PC-9 (cell line): ENCODE measurements at regions of chr12 and their contacts with region 1.

Region 1: GRCh38 chr12:13165617-13166041 is 30.9 kb upstream of the EMP1 start:
- DNase-seq: peak; percentile 95 to 98
- H3K4me3 ChIP-seq: no peak overlapping the region
- H3K27ac ChIP-seq: peak overlapping the region; percentile 97
- H3K4me1 ChIP-seq: peaks cover 73% of the 10 kb centered on the region
- H3K27me3 ChIP-seq: no peaks in the 10 kb centered on the region
- CTCF ChIP-seq: no peak

Region 2: DNA sequence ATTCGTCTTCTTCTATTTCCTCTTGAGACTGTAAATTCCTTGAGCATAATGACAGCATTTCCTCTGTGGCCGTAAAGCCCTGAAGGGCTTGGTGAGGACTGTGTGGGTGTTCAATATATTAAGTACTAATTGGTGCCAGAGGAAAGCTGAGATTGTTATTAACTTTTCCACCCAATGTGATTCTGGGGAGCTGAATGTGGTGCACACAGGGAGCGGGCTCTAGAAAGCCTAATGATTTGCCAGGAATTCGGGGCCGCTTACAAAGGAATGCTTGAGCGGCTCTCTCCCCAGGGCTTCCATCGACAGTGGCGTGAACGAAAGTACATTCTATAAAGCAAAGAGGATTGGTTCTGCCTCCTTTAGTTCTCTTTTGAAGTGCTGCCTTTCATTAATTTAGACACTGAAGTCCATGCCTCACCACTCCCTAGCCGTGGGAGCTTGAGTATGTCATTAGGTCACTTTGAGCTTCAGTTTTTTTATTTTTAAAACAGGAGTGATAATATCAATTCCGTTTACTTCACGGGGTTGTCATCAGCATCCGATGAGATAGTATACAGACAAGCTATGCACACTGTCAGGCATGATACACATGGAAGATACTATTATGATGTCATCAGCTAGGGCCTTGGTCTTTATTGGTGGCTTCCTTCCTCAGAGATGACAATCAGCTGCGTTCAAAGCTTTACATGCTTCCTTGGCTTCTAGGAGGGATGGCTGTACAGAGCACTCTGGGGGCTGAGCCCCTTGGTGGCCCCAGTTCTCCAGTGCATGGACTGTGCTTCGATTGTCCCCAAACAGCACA is 51.2 kb before region 1 on chr12:
- CTCF ChIA-PET with region 1: no interaction called
- POLR2A ChIA-PET with region 1: interaction called, 13 read pairs
- intact Hi-C with region 1: no loop called
- DNase-seq: no peak
- H3K4me3 ChIP-seq: no peak overlapping the region
- H3K27ac ChIP-seq: no peak overlapping the region
- H3K4me1 ChIP-seq: peaks cover 15% of the 10 kb centered on the region
- H3K27me3 ChIP-seq: no peaks in the 10 kb centered on the region
- CTCF ChIP-seq: no peak

Region 3: DNA sequence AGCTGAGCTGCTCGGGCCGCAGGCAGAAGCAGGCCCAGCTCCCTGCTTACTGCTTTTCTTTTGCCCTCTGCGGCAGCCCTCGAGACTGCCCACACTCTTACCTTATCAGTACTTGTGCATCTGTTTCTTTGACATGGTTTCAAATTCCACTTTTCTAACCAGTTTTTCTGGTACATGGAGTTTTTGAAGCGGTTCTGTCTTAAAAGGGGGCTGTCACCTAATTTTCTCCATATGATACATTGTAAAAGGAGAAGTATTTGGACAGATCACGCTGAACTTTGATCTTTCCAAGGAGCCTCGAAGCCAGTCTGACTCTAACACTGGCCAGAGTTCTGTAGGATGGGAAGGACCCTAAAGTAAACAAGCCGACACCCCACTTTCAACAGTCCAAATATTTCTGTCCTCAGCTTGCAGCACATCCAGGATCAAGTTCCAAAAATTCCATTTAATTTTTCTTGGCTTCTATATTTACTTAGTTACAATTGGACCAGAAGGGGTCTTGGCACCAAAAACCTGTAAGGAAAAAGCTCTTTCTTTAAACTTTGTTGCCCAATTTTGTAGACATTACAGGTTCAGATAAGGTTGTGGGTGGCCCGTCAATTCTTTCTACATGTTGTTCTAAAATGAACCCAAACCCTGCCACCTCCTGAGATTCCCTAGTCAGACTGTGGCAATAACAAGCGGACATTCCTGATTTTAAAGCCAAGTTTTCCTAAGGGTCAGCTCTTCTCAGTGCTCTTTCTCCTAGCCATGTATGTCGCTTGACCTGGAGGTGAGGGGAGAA is 17.4 kb before region 1 on chr12:
- CTCF ChIA-PET with region 1: interaction called, 4 read pairs
- POLR2A ChIA-PET with region 1: interaction called, 19 read pairs
- intact Hi-C with region 1: no loop called
- DNase-seq: peak; percentile 68 to 84
- H3K4me3 ChIP-seq: no peak overlapping the region
- H3K27ac ChIP-seq: peak overlapping the region; percentile 43
- H3K4me1 ChIP-seq: peaks cover 38% of the 10 kb centered on the region
- H3K27me3 ChIP-seq: no peaks in the 10 kb centered on the region
- CTCF ChIP-seq: no peak

Region 4: DNA sequence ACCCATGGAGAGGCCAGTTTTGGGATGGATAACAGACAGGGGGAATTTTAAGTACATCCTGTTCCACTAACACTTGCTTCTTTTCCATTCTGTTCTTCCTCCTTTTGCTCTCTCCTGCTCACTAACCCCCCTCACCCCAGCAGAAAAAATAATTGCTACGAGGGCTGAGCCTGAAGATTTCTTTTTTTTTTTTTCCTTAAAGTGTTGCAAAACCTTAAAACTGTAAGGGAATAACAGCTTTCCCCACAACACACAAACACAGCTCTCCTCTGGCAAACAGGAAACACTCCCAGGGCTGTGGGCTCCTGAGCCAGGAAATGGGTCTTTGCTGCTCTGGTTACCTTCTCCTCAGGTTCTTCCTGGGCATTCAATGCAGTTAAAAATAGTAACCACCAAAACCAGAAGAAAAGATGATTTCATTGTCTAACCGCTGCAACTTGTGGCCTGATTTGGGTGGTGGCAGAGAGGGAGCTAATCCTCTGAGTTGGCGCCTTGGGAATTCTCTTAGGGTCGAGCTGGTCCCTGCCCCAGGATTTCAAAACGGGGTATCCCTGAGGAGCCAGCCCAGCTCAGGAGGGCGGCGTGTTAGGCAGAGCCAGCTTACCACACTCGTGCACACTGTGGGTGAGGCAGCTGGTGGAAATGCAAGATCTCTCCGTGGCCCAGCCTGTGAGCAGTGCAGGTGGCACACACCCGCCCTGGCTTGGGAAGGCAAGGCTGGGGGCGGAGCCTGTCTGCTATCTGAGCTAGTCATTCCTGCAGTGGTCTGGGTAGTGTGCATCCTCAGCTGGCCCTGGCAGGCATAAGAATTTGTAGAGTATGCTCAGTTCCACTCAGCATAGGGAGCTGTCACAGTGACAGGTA is 13.8 kb after region 1 on chr12:
- CTCF ChIA-PET with region 1: no interaction called
- POLR2A ChIA-PET with region 1: interaction called, 27 read pairs
- intact Hi-C with region 1: no loop called
- DNase-seq: peak; percentile 94 to 95
- H3K4me3 ChIP-seq: peak overlapping the region; percentile 39; the same call in 1 of the 2 replicates
- H3K27ac ChIP-seq: peak overlapping the region; percentile 95
- H3K4me1 ChIP-seq: peaks cover 89% of the 10 kb centered on the region
- H3K27me3 ChIP-seq: no peaks in the 10 kb centered on the region
- CTCF ChIP-seq: no peak

Region 5: DNA sequence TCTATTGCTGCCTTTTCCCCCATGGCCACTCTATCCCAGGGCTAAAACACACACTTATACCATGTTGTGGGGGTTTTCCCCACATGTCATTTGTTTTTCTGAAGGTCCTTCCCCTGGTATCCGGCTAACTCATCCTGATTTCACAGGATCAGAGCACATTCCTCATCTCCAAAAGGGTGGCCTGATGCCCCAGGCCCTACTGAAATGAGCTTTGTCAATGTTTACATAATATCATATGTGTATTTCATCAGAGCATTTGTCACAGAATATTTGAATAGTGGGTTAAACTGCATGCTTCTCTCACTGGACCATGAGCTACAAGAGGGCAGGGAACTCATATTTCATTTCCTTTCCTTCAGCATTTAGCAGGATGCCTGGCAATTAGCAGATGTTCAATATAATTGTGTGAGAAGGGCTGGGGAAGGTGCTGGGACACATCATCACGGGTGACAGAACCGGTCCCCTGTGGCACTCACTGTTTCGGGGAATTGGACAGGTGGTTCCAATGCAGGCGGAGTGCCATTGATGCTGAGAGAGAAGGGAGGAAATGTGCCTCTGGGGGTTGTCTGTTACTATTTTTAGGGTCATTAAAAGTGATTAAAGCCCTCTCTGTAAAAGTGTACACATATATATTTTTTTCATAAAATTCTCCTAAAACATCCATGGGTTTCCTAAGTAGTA is 57.7 kb after region 1 on chr12:
- CTCF ChIA-PET with region 1: no interaction called
- POLR2A ChIA-PET with region 1: interaction called, 17 read pairs
- intact Hi-C with region 1: no loop called
- DNase-seq: peak; percentile 71 to 95
- H3K4me3 ChIP-seq: no peak overlapping the region
- H3K27ac ChIP-seq: peak overlapping the region; percentile 96
- H3K4me1 ChIP-seq: peaks cover 46% of the 10 kb centered on the region
- H3K27me3 ChIP-seq: no peaks in the 10 kb centered on the region
- CTCF ChIP-seq: no peak